ENCODE measurements at regions of chrX and their contacts with region 1.

Region 1: GRCh38 chrX:133670383-133670782 is 255.1 kb upstream of the GPC4 start:
- DNase-seq: peak in 1 of 5 donors; percentile 33
- H3K4me3 ChIP-seq: no peak overlapping the region
- H3K27ac ChIP-seq: no peak overlapping the region
- H3K4me1 ChIP-seq: no peaks in the 10 kb centered on the region
- H3K27me3 ChIP-seq: no peaks in the 10 kb centered on the region
- CTCF ChIP-seq: peak; percentile 46 to 74 (median 69)
- EP300 ChIP-seq: no peak
- POLR2A ChIP-seq: no peak

Region 2: DNA sequence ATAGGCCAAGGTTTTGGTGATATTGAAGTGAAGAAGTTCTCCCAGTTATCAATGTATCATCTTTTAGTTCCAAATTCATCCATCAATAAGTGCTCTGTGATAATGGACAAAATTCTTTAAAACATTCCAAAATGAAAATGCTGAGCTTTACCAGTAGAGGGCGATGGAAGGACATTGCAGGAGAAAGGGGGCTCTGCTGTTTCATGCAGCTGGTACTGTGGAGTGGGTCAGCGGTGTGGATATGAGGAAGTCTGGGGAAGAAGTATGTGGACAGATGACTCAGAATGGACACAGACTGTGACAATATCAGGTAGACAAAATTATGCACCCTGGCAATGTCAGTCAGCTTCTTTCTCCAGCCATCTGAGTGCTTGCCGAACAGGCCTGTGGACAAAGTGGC is 665.3 kb before region 1 on chrX:
- intact Hi-C with region 1: loop called in 1 of 4 experiments (anchors 10 kb)
- DNase-seq: no peak
- H3K4me3 ChIP-seq: no peak overlapping the region
- H3K27ac ChIP-seq: no peak overlapping the region
- H3K4me1 ChIP-seq: no peaks in the 10 kb centered on the region
- H3K27me3 ChIP-seq: no peaks in the 10 kb centered on the region
- CTCF ChIP-seq: peak in 1 of 3 donors; percentile 36
- EP300 ChIP-seq: no peak
- POLR2A ChIP-seq: no peak

Region 3: DNA sequence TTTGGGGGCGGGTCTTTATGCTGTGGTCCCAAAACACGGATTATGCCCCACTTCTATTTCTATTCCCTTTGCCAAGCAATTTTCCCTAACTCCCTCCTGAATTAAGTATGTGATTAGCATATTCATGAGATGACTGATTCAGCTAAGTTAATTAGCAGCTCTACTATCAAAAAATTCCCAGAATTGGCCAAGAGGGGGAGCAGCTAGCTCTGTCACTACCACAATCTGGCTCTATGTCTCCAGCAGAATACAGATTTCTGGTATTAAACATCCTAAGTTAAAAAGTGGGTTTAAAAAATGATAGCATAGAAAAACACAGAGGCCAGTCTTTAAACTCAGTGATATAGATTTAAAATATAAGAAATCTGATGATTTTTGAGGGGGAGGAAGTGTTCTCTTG is 335.4 kb before region 1 on chrX:
- intact Hi-C with region 1: loop called in 2 of 4 experiments (anchors 10 kb)
- DNase-seq: peak in 1 of 5 donors; percentile 35
- H3K4me3 ChIP-seq: no peak overlapping the region
- H3K27ac ChIP-seq: no peak overlapping the region
- H3K4me1 ChIP-seq: no peaks in the 10 kb centered on the region
- H3K27me3 ChIP-seq: no peaks in the 10 kb centered on the region
- CTCF ChIP-seq: peak in 2 of 3 donors; percentile 21 to 25
- EP300 ChIP-seq: no peak
- POLR2A ChIP-seq: no peak

Region 4: GRCh38 chrX:133611676-133612075 is 58.7 kb before region 1 on chrX:
- intact Hi-C with region 1: no loop called
- DNase-seq: no peak
- H3K4me3 ChIP-seq: no peak overlapping the region
- H3K27ac ChIP-seq: no peak overlapping the region
- H3K4me1 ChIP-seq: no peaks in the 10 kb centered on the region
- H3K27me3 ChIP-seq: no peaks in the 10 kb centered on the region
- CTCF ChIP-seq: no peak
- EP300 ChIP-seq: no peak
- POLR2A ChIP-seq: no peak

Region 5: GRCh38 chrX:133776072-133776471 is 105.7 kb after region 1 on chrX:
- intact Hi-C with region 1: no loop called
- DNase-seq: no peak
- H3K4me3 ChIP-seq: no peak overlapping the region
- H3K27ac ChIP-seq: no peak overlapping the region
- H3K4me1 ChIP-seq: no peaks in the 10 kb centered on the region
- H3K27me3 ChIP-seq: no peaks in the 10 kb centered on the region
- CTCF ChIP-seq: no peak
- EP300 ChIP-seq: no peak
- POLR2A ChIP-seq: no peak

Measured in ovary (tissue), 10 donors.